Activated CD4-positive, alpha-beta T cell treated with anti-CD3 and anti-CD28 coated beads for 36 hours (primary cell): ENCODE measurements at regions of chr6 and their contacts with region 1.

Region 1: DNA sequence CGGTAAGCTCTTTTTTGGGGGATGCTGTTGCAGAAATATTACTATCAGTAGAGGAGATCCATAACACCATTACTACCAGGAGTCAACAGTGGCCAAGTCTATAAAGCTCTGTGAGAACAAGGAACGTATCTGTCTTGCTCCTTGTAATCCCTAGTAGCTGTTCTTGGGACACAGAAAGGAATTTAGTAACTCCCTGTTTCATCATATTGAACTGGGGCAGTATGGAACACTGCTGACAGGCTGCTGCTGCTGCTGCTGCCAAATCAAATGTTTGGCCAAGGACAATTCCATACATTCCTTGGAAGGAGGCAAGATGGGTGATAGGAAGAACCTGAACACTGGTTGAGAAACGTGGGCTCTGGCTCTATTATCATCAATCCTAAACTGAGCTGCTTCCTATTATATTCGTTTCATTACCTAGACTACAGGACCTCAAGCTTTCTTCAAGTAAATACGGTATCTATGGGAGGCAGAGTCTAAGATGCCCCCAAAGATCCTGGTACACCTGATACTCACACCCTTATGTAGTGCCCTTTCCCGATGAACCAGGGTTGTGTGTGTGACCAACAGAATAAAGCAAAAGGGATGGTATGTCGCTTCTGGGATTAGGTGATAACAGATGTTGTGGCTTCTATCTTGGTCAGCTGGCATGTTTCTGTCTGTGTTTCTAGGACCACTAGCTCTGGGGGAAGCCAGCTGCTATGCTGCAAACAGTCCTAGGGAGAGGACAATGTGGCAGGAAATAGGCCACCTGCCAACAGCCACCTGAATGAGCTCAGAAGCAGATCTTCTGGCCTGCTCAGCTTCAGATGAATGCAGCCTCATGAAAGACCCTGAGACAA is 39.5 kb downstream of the ELOVL5 start:
- DNase-seq: no peak
- ATAC-seq: no peak
- H3K4me3 Mint-ChIP-seq: no peak overlapping the region
- H3K27ac Mint-ChIP-seq: peak overlapping the region; percentile 59
- H3K4me1 Mint-ChIP-seq: peaks cover 81% of the 10 kb centered on the region
- H3K27me3 Mint-ChIP-seq: no peaks in the 10 kb centered on the region

Region 2: GRCh38 chr6:52399511-52400312 is 909.6 kb before region 1 on chr6:
- CTCF ChIA-PET with region 1: no interaction called
- POLR2A ChIA-PET with region 1: no interaction called
- intact Hi-C with region 1: loop called in 1 of 2 experiments (anchors 10 kb)
- DNase-seq: peak; percentile 54
- ATAC-seq: peak; percentile 51
- H3K4me3 Mint-ChIP-seq: no peak overlapping the region
- H3K27ac Mint-ChIP-seq: no peak overlapping the region
- H3K4me1 Mint-ChIP-seq: peaks cover 64% of the 10 kb centered on the region
- H3K27me3 Mint-ChIP-seq: no peaks in the 10 kb centered on the region

Region 3: GRCh38 chr6:53284901-53285300 is 24.4 kb before region 1 on chr6:
- CTCF ChIA-PET with region 1: no interaction called
- POLR2A ChIA-PET with region 1: no interaction called
- intact Hi-C with region 1: loop called in 1 of 2 experiments (anchors 2 kb)
- DNase-seq: peak; percentile 46
- ATAC-seq: peak; percentile 82
- H3K4me3 Mint-ChIP-seq: no peak overlapping the region
- H3K27ac Mint-ChIP-seq: peak overlapping the region; percentile 68
- H3K4me1 Mint-ChIP-seq: peaks cover 49% of the 10 kb centered on the region
- H3K27me3 Mint-ChIP-seq: no peaks in the 10 kb centered on the region

Region 4: GRCh38 chr6:53335208-53335994 is 26.1 kb after region 1 on chr6:
- CTCF ChIA-PET with region 1: interaction called, 6 read pairs
- POLR2A ChIA-PET with region 1: no interaction called
- intact Hi-C with region 1: loop called (anchors 1 to 5 kb)
- DNase-seq: peak; percentile 77
- ATAC-seq: peak; percentile 82
- H3K4me3 Mint-ChIP-seq: peak overlapping the region; percentile 76
- H3K27ac Mint-ChIP-seq: peak overlapping the region; percentile 99
- H3K4me1 Mint-ChIP-seq: peaks cover 86% of the 10 kb centered on the region
- H3K27me3 Mint-ChIP-seq: no peaks in the 10 kb centered on the region

Region 5: DNA sequence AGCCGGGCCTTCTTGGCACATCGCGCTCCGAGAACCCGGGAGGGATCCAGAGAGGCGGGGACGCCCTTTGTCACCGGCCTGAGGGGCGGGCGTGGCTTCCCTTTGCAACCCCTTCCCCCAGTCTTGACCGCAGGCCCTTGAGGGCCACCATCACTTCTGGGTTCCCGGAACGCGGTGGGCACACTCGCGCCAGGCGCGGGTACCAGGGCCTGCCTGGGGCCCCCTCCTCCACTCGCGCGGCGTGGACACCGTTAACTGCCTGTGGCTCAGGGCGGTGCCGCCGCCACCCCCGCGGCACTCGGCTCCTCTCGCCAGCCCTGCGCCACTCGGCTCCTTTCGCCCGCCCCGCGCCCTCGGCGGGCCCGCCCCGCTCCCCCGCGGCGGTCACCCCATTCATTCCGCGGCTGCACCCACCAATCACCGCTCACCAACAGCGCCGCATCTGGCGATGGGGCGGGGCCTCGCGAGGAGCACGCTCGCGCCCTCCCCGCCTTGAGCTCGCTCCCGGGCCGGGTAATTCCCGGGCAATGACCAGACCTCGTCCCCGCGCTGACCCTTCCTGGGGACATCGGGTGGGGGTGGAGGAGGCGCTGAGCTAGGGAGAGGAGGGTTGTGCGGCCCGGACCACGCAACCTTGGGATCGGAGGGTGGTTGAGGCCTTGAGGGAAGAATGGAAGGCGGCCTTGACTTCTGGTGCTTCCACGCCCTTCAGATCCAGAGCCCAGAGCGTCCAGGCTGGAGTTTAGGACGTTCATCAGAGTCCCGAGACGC is 50.0 kb after region 1 on chr6:
- CTCF ChIA-PET with region 1: no interaction called
- POLR2A ChIA-PET with region 1: no interaction called
- intact Hi-C with region 1: loop called in 1 of 2 experiments (anchors 2 kb)
- DNase-seq: peak; percentile 95
- ATAC-seq: peak; percentile 96
- H3K4me3 Mint-ChIP-seq: peak overlapping the region; percentile 87
- H3K27ac Mint-ChIP-seq: peak overlapping the region; percentile 98
- H3K4me1 Mint-ChIP-seq: peaks cover 45% of the 10 kb centered on the region
- H3K27me3 Mint-ChIP-seq: no peaks in the 10 kb centered on the region

Region 6: DNA sequence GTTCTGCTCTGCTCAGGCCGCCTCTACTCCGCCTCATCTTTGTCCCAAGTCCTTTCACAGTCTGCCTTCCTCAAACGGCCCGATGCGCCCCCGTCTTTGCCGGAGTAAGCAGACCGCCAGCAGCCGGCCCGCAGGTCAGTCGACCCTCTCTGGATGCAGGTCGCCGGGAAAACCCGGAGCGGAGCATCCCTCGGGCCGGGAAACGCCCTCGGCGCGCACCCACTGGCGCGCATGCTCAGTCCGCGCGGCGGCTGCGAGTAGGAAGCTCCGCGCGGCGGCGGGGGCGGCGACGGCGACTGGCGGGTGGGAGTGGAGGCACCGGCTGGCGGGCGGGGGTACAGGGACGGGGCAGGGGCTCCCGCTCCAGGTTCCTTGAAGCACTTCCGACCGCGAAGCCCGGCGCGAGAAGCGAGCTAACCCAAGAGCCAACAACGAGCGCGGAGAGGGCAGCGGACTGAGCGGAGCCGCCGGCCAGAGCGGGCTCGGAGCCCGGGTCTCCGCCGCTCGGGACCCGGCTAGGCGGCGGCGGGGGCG is 485.5 kb after region 1 on chr6 and contains the start of gene LRRC1:
- CTCF ChIA-PET with region 1: no interaction called
- POLR2A ChIA-PET with region 1: no interaction called
- intact Hi-C with region 1: loop called in 1 of 2 experiments (anchors 10 kb)
- DNase-seq: peak; percentile 90
- ATAC-seq: peak; percentile 75
- H3K4me3 Mint-ChIP-seq: peak within 1 kb of the TSS; percentile 90
- H3K27ac Mint-ChIP-seq: peak within 1 kb of the TSS; percentile 83
- H3K4me1 Mint-ChIP-seq: peaks cover 17% of the 10 kb centered on the region
- H3K27me3 Mint-ChIP-seq: peaks cover 22% of the 10 kb centered on the region
- total RNA-seq, gene LRRC1: 2.3 to 3.1 TPM